Activated T-helper 1 cell treated with anti-CD3 and anti-CD28 coated beads, Interleukin-12 subunit alpha, Interleukin-12 subunit beta, Interleukin-2, Interleukin-4 antibody, amounts not matched to agents 30 ng/mL and 10 ng/mL and 1 ng/mL, durations not matched to agents 14 hours and 24 hours and 36 hours (primary cell): ENCODE measurements at regions of chr2 and their contacts with region 1.

Region 1: GRCh38 chr2:39913648-39914461 is 134.8 kb upstream of the THUMPD2 start:
- DNase-seq: no peak
- H3K4me3 Mint-ChIP-seq: no peak overlapping the region
- H3K27ac Mint-ChIP-seq: peak overlapping the region; percentile 53
- H3K4me1 Mint-ChIP-seq: peaks cover 17% of the 10 kb centered on the region
- H3K27me3 Mint-ChIP-seq: peaks cover 17% of the 10 kb centered on the region

Region 2: DNA sequence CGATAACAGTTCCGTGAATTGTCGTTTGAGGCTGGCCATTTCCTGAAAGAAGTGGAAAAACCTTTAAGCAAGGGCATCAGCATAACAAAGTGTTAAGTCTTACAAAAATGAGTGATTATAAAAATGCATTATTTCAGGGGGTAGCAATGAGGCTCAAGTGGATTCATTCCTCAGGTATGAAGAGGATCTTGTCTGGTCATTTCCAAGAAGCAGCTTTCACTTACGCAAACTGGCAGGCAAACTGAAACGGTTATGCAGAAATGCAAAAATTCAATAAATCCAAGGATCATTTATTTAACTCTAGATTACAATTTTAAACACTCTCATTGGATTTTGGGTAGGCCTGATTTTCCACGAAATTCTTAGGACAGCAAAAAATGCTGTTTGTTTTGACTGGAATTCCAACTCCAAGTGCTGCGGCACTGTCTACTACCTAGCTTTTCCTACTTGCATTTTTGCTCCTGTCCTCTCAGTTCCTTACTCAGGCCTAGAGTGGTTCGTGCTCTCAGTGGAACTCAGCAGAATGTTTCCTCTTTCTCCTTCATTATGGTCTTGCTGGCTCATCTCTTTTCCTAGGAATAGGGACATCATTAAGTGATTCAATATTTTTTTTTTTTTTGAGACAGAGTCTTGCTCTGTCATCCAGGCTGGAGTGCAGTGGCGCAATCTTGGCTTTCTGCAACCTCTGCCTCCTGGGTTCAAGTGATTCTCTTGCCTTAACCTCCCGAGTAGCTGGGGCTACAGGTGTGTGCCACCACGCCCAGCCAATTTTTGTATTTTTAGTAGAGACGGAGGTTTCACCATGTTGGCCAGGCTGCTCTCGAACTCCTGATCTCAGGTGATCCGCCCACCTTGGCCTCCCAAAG is 1098.0 kb before region 1 on chr2:
- intact Hi-C with region 1: no loop called
- DNase-seq: no peak
- H3K4me3 Mint-ChIP-seq: no peak overlapping the region
- H3K27ac Mint-ChIP-seq: no peak overlapping the region
- H3K4me1 Mint-ChIP-seq: no peaks in the 10 kb centered on the region
- H3K27me3 Mint-ChIP-seq: no peaks in the 10 kb centered on the region

Region 3: GRCh38 chr2:39875182-39875898 is 38.5 kb before region 1 on chr2:
- intact Hi-C with region 1: no loop called
- DNase-seq: no peak
- H3K4me3 Mint-ChIP-seq: no peak overlapping the region
- H3K27ac Mint-ChIP-seq: no peak overlapping the region
- H3K4me1 Mint-ChIP-seq: no peaks in the 10 kb centered on the region
- H3K27me3 Mint-ChIP-seq: peaks cover 3% of the 10 kb centered on the region

Region 4: DNA sequence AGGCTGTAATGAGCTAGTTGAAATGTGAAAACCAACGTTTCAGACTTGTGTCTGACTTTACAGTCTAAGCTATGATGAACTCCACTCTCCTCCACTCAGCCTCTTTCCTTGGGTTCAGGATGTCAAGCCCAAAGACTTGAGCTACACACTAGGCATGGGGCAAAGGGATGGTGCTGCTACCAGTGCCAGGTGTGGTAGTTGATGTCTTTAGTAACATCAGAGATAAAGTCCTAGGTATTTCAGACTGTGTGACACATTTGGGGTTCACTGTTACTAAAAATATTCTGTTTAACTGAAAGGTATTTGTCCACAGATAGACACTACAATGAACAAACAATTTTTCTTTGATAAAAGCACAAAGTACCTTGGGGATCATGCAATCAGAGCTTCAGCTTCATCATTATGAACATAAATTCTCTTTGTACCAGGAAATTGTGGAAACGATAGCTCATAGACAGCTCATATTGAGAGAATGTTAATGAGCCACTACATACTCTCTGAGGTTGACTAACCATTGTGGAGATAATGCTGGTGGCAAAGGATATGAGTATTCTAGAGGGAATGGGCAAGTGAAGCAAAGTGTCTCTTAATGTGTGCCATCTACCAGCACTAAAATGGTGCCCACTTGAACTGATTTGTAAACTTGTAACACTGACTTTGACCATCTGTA is 118.9 kb after region 1 on chr2:
- intact Hi-C with region 1: loop called (anchors 5 kb)
- DNase-seq: no peak
- H3K4me3 Mint-ChIP-seq: no peak overlapping the region
- H3K27ac Mint-ChIP-seq: peak overlapping the region; percentile 54
- H3K4me1 Mint-ChIP-seq: peaks cover 9% of the 10 kb centered on the region
- H3K27me3 Mint-ChIP-seq: no peaks in the 10 kb centered on the region

Region 5: GRCh38 chr2:40150266-40150665 is 236.4 kb after region 1 on chr2:
- intact Hi-C with region 1: no loop called
- DNase-seq: no peak
- H3K4me3 Mint-ChIP-seq: no peak overlapping the region
- H3K27ac Mint-ChIP-seq: no peak overlapping the region
- H3K4me1 Mint-ChIP-seq: no peaks in the 10 kb centered on the region
- H3K27me3 Mint-ChIP-seq: peaks cover 6% of the 10 kb centered on the region

Region 6: GRCh38 chr2:40451918-40452605 is 538.2 kb after region 1 on chr2 and contains the start of gene SLC8A1:
- intact Hi-C with region 1: loop called (anchors 2 kb)
- DNase-seq: peak; percentile 3
- H3K4me3 Mint-ChIP-seq: peak within 1 kb of the TSS; percentile 86
- H3K27ac Mint-ChIP-seq: peak within 1 kb of the TSS; percentile 62
- H3K4me1 Mint-ChIP-seq: peaks cover 29% of the 10 kb centered on the region
- H3K27me3 Mint-ChIP-seq: peaks cover 29% of the 10 kb centered on the region
- total RNA-seq, gene SLC8A1: 1.8 and 2.9 TPM in 2 replicates

Region 7: DNA sequence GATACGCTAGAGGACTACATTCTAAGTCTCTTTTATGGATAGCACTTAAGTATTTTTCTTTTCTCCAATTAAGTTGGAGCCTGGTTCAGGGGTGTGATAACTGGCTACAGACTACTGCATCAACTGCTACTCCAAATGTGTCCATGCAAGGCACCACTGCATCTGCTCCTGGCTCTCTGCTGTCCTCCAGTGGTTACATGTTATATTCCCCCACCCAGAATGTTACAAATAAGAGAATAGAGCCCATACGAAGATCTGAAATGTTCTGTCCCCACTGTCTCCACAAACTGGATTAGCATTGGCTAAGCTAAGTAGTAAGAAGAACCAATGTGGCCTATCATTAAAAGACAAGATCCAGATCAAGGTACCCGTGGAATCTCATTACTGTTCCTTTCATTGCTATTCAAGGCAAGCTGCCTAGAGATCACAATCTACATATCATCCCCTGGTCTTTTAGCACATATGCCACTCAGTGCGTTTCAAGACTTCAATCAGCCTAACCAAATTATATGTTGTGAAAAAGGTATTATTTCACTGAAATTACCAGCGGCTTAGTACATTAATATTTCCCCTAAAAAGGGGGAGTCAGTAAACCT is 846.3 kb after region 1 on chr2:
- intact Hi-C with region 1: loop called (anchors 1 kb)
- DNase-seq: no peak
- H3K4me3 Mint-ChIP-seq: no peak overlapping the region
- H3K27ac Mint-ChIP-seq: no peak overlapping the region
- H3K4me1 Mint-ChIP-seq: no peaks in the 10 kb centered on the region
- H3K27me3 Mint-ChIP-seq: no peaks in the 10 kb centered on the region

Region 8: DNA sequence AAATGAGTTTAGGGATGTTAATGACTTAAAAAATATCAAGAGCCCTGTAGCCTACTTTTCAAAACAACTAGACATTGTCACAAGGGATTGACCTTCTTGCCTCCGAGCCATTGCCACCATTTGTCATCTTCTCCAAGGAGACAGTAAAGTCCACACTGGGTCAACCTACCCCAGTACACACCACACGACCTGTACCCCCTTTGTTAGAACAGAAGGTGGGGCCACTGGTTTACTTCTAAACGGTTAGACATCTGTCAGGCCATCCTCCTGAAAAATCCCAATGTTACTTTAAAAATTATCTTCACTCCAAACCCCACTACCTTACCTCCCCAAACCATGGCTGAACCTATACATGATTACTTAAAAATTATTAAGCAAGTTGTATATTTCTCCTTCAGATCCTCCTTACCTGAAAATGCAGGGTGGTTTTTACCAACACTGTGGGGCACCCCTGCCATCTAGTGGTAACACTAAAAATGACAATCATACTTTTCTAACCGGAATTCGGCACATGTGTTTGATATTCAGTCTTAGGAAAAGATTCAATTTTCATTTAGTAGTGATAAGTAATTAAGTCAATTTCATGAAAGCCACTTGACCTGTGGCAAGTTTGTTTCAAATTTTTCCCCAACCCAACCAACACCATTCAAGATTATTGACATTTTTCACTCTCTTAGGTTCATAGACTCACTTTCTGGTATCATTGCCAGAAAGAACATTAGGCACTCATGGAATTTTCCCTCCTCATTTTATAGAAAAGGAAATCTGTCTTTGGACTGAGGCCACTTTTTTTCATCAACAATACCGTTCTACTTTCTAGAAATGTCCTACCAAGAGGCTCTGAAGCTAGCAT is 1868.7 kb after region 1 on chr2:
- intact Hi-C with region 1: loop called (anchors 1 kb)
- DNase-seq: peak; percentile 4
- H3K4me3 Mint-ChIP-seq: no peak overlapping the region
- H3K27ac Mint-ChIP-seq: no peak overlapping the region
- H3K4me1 Mint-ChIP-seq: no peaks in the 10 kb centered on the region
- H3K27me3 Mint-ChIP-seq: peaks cover 13% of the 10 kb centered on the region